IMR-90 (cell line): ENCODE measurements at regions of chr16 and their contacts with region 1.

Region 1: GRCh38 chr16:47627085-47627639 is 166.0 kb downstream of the PHKB start:
- DNase-seq: no peak
- ATAC-seq: no peak
- H3K4me3 ChIP-seq: no peak overlapping the region
- H3K27ac ChIP-seq: no peak overlapping the region
- H3K4me1 ChIP-seq: no peaks in the 10 kb centered on the region
- H3K27me3 ChIP-seq: no peaks in the 10 kb centered on the region
- CTCF ChIP-seq: no peak
- POLR2A ChIP-seq: no peak
- RAD21 ChIP-seq: no peak

Region 2: GRCh38 chr16:47565454-47565853 is 61.7 kb before region 1 on chr16:
- CTCF ChIA-PET with region 1: no interaction called
- POLR2A ChIA-PET with region 1: no interaction called
- dilution Hi-C with region 1: no loop called
- in situ Hi-C with region 1: loop called (anchors 10 kb)
- intact Hi-C with region 1: no loop called
- DNase-seq: peak; percentile 66
- ATAC-seq: no peak; the same call in 1 of the 2 replicates
- H3K4me3 ChIP-seq: no peak overlapping the region
- H3K27ac ChIP-seq: no peak overlapping the region
- H3K4me1 ChIP-seq: peaks cover 2% of the 10 kb centered on the region; the same call in 1 of the 2 replicates
- H3K27me3 ChIP-seq: no peaks in the 10 kb centered on the region
- CTCF ChIP-seq: no peak
- POLR2A ChIP-seq: no peak
- RAD21 ChIP-seq: no peak

Region 3: DNA sequence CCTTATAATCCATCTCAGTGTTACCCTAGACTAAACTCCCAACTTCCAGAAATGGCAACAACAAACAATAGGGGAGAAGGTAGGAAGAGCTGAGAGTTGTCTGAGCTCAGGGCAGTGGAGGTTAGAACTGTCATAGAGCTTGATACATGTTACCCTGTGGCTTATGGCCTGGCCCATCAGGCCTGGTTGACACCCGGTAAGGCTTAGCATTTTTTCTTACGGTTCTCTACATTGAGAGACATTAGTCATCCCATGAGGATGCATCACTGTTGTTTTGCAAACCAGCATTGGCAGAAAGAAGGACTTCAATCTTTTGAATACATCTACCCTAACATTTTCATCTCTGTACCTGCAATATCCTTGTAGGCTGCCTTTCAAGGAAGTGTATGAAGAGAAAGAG is 60.5 kb after region 1 on chr16:
- CTCF ChIA-PET with region 1: no interaction called
- POLR2A ChIA-PET with region 1: no interaction called
- dilution Hi-C with region 1: no loop called
- in situ Hi-C with region 1: loop called (anchors 10 kb)
- intact Hi-C with region 1: no loop called
- DNase-seq: peak; percentile 15
- ATAC-seq: no peak
- H3K4me3 ChIP-seq: no peak overlapping the region
- H3K27ac ChIP-seq: no peak overlapping the region
- H3K4me1 ChIP-seq: no peaks in the 10 kb centered on the region
- H3K27me3 ChIP-seq: no peaks in the 10 kb centered on the region
- CTCF ChIP-seq: no peak
- POLR2A ChIP-seq: no peak
- RAD21 ChIP-seq: no peak